ENCODE measurements at regions of chr1 and their contacts with region 1.

Region 1: GRCh38 chr1:151934048-151934493 is 24.8 kb upstream of the THEM4 start:
- DNase-seq: peak; percentile 55
- CTCF ChIP-seq: peak; percentile 62

Region 2: GRCh38 chr1:151993654-151994496 is 59.8 kb after region 1 on chr1 and contains the start of gene S100A10:
- in situ Hi-C with region 1: loop called (anchors 10 kb)
- DNase-seq: peak; percentile 58
- CTCF ChIP-seq: no peak

Measured in GM13976 (cell line).